ENCODE measurements at regions of chrX and their contacts with region 1.

Region 1: GRCh38 chrX:69627744-69628143 is 11.8 kb downstream of the EDA start:
- DNase-seq: no peak
- H3K4me3 Mint-ChIP-seq: no peak overlapping the region
- H3K27ac Mint-ChIP-seq: no peak overlapping the region
- H3K4me1 Mint-ChIP-seq: peaks cover 25% of the 10 kb centered on the region
- H3K27me3 Mint-ChIP-seq: no peaks in the 10 kb centered on the region

Region 2: GRCh38 chrX:69808375-69808774 is 180.6 kb after region 1 on chrX:
- intact Hi-C with region 1: loop called (anchors 2 kb)
- DNase-seq: no peak
- H3K4me3 Mint-ChIP-seq: no peak overlapping the region
- H3K27ac Mint-ChIP-seq: no peak overlapping the region
- H3K4me1 Mint-ChIP-seq: peaks cover 12% of the 10 kb centered on the region
- H3K27me3 Mint-ChIP-seq: peaks cover 2% of the 10 kb centered on the region